ENCODE measurements at regions of chr13 and their contacts with region 1.

Region 1: GRCh38 chr13:78121459-78122348 is 203.1 kb upstream of the EDNRB start:
- DNase-seq: peak; percentile 38 to 52
- H3K4me3 ChIP-seq: no peak overlapping the region
- H3K27ac ChIP-seq: no peak overlapping the region
- H3K4me1 ChIP-seq: no peaks in the 10 kb centered on the region
- H3K27me3 ChIP-seq: no peaks in the 10 kb centered on the region
- CTCF ChIP-seq: peak; percentile 74 to 86 (median 80)
- POLR2A ChIP-seq: no peak

Region 2: DNA sequence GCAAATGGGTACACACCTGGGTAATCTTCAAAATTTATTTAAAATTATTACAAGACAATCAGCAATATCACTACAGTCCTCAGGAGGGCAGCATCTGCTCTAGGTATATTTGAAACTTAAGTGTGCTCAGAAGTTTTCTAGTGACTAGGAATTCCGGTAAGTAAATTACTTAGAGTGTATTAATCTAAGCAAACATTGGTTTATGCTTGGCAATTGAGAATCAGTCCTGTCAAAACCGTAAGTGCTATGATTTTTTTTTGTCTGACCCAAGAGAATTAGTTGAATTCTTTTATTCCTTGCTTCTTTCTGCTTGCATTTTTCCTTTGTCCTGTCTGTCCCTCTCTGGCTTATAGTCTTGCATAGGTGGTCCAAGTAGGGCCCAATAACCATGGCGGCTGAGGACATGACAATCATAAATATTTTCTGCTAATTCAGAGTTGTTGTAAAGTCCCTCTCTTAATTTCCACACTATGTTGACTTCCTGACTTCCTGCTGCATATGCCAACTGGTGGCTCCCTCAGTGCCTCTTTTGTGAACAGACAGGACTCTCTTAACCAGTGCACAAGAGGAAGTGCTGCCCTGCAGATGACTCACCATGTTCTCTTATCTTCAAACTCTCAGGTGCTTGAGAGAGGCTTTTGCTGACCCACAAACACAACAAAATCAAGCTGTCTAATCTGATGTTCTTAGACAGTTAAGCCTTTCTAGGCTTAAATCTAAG is 342.0 kb before region 1 on chr13:
- intact Hi-C with region 1: loop called (anchors 2 kb)
- DNase-seq: peak; percentile 40 to 54
- H3K4me3 ChIP-seq: no peak overlapping the region
- H3K27ac ChIP-seq: no peak overlapping the region
- H3K4me1 ChIP-seq: peaks cover 7 to 12% of the 10 kb centered on the region in 2 donors
- H3K27me3 ChIP-seq: no peaks in the 10 kb centered on the region
- CTCF ChIP-seq: peak; percentile 34 to 87 (median 58)
- POLR2A ChIP-seq: no peak

Region 3: GRCh38 chr13:78183732-78184131 is 62.0 kb after region 1 on chr13:
- intact Hi-C with region 1: no loop called
- DNase-seq: no peak
- H3K4me3 ChIP-seq: no peak overlapping the region
- H3K27ac ChIP-seq: no peak overlapping the region
- H3K4me1 ChIP-seq: no peaks in the 10 kb centered on the region
- H3K27me3 ChIP-seq: no peaks in the 10 kb centered on the region
- CTCF ChIP-seq: no peak
- POLR2A ChIP-seq: no peak

Measured in thyroid gland (tissue), 4 donors.